Posterior vena cava (tissue), 2 donors: ENCODE measurements at regions of chr11 and their contacts with region 1.

Region 1: GRCh38 chr11:69377596-69378302 is 83.8 kb downstream of the MYEOV start:
- DNase-seq: no peak

Region 2: DNA sequence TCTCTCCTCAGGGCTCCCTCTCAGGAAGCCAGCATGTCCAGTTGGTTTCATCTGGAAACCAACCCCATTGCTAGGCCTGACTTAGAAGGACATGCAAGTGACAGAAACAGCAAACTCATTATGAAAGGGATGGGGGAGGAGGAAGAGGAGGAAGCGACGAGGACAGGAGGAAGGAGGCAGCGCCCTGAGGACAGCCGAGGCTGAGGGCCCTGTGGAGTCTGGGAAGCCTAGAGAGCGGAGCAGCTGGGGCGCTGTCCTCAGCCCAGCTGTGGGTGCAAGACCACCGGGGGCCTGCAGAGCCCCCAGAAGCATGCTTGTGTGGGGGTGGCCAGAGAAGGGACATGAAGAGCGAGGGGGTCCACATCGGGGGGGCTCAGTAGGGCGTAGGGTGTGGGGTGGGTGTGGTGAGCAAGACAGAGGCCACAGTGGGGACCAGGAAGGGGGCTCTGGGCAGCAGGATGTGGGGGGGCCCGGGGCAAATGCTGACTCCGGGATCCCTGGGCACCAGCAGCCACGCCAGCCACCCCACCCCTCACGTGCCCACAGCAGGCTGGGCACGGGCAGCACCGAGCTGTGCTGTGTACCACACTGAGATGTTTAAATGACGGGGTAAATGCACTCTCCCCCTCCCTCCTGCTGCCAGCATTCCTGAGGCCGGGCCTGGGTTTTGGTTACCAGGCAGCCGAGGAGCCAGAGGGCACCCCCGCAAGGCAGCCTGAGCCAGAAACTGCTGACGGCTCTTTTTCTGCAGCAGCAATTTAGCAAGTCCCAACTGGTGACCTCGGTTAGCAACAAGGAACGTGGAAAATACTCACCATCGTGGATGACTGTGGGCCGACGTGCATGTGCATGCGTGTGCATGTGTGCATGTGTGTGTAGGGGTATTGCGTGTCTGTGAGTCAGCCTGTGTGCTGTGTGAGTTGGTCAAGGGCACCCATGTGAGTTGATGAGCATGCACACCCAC is 21.1 kb after region 1 on chr11:
- intact Hi-C with region 1: no loop called
- DNase-seq: peak; percentile 79

Region 3: GRCh38 chr11:69486773-69487291 is 109.1 kb after region 1 on chr11:
- intact Hi-C with region 1: loop called in 1 of 2 experiments (anchors 2 kb)
- DNase-seq: peak; percentile 83